Activated CD4-positive, alpha-beta memory T cell treated with anti-CD3 and anti-CD28 coated beads for 36 hours (primary cell): ENCODE measurements at regions of chr5 and their contacts with region 1.

Region 1: GRCh38 chr5:131252824-131253171 is 11.1 kb upstream of the CDC42SE2 start:
- DNase-seq: peak; percentile 90
- H3K4me3 Mint-ChIP-seq: peak overlapping the region; percentile 87
- H3K27ac Mint-ChIP-seq: peak overlapping the region; percentile 96
- H3K4me1 Mint-ChIP-seq: peaks cover 56% of the 10 kb centered on the region
- H3K27me3 Mint-ChIP-seq: no peaks in the 10 kb centered on the region

Region 2: GRCh38 chr5:130992095-130992494 is 260.7 kb before region 1 on chr5:
- CTCF ChIA-PET with region 1: no interaction called
- POLR2A ChIA-PET with region 1: no interaction called
- intact Hi-C with region 1: no loop called
- DNase-seq: no peak
- H3K4me3 Mint-ChIP-seq: no peak overlapping the region
- H3K27ac Mint-ChIP-seq: no peak overlapping the region
- H3K4me1 Mint-ChIP-seq: no peaks in the 10 kb centered on the region
- H3K27me3 Mint-ChIP-seq: peaks cover 3% of the 10 kb centered on the region

Region 3: DNA sequence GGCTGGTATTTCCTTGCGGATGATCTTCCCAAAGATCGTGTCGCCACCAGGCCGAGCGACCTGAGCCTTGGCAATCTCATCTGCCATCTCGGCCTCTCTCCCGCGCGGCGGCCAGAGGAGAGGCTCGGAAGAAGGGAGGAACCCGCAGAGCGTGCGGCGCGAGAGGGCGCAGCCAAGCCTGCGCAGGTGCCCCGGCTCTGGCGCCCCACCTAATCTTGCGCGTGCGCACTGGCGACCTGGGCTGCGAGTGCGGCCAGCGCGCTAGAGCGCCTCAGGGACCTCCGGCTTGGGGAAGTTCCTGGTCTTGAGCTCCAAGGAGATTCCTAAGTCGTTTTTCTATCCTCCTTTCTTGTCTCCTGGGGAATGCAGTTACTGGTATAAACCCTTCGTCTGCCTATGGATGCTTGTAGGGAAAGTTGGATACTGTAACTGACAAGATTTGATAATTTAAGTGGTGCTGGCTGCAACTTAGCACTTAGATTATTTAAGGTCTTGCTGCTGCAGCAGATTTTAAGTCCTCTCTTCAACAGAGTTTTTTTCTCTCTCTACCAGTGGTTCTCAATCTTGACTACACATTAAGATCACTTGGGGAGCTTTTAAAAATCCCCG is 87.6 kb before region 1 on chr5 and contains the start of gene HINT1:
- CTCF ChIA-PET with region 1: interaction called, 4 read pairs
- POLR2A ChIA-PET with region 1: interaction called, 12 read pairs
- intact Hi-C with region 1: loop called (anchors 1 kb)
- DNase-seq: peak; percentile 95
- H3K4me3 Mint-ChIP-seq: peak within 1 kb of the TSS; percentile 98
- H3K27ac Mint-ChIP-seq: peak within 1 kb of the TSS; percentile 99
- H3K4me1 Mint-ChIP-seq: peaks cover 45% of the 10 kb centered on the region
- H3K27me3 Mint-ChIP-seq: no peaks in the 10 kb centered on the region
- total RNA-seq, gene HINT1: 349 to 361 TPM

Region 4: GRCh38 chr5:131218392-131218791 is 34.4 kb before region 1 on chr5:
- CTCF ChIA-PET with region 1: interaction called, 3 read pairs
- POLR2A ChIA-PET with region 1: interaction called, 4 read pairs
- intact Hi-C with region 1: loop called (anchors 1 kb)
- DNase-seq: no peak
- H3K4me3 Mint-ChIP-seq: no peak overlapping the region
- H3K27ac Mint-ChIP-seq: no peak overlapping the region
- H3K4me1 Mint-ChIP-seq: peaks cover 43% of the 10 kb centered on the region
- H3K27me3 Mint-ChIP-seq: no peaks in the 10 kb centered on the region

Region 5: GRCh38 chr5:131272307-131272706 is 19.5 kb after region 1 on chr5:
- CTCF ChIA-PET with region 1: interaction called, 3 read pairs
- POLR2A ChIA-PET with region 1: interaction called, 55 read pairs
- intact Hi-C with region 1: loop called (anchors 1 kb)
- DNase-seq: no peak
- H3K4me3 Mint-ChIP-seq: peak overlapping the region; percentile 77
- H3K27ac Mint-ChIP-seq: peak overlapping the region; percentile 96
- H3K4me1 Mint-ChIP-seq: peaks cover 75% of the 10 kb centered on the region
- H3K27me3 Mint-ChIP-seq: no peaks in the 10 kb centered on the region

Region 6: DNA sequence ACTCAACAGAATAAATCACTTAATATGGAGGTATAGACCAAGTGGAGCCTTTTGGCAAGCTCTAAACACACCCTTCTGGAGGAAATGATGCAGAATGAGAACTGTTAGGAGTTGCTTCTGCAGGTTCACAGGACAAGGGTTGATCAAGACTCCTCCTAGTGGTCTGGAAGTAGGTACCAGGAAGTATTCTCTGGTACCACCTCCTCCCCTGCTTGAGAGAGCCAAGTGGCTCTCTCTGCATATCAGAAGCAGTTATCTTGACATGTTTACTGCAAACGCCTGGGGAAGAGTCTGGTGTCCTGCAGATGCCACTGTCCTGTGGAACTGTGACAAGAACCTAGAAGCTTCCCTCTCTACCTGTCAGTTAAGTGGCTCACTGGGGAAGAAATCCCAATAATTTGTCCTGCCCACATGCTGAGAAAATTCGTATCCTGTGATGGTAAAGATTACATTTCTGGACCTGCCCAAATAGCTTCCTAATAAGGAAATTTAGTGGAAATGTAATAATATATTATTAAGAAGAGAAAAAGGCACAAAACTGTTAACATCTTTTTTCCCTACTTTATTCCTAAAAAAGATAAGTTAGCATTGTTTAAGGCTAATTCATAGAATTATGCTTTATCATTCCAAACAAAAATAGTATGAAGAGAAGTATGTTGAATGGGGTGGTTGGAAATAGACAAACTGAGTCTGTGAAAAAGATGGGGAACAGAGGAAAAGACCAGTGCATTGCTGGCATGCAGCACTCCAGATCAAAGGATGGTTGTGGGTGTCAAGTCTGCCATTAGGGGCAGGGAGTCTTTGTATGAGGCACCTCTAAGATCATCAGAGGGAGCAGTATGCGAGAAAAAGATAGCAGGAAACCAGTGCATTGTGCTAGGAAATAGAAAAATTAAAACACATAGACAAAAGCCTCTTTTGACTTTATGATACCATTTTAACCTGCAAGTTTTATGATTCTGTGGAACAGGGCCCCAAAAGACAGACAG is 129.9 kb after region 1 on chr5:
- CTCF ChIA-PET with region 1: interaction called, 6 read pairs
- POLR2A ChIA-PET with region 1: interaction called, 13 read pairs
- intact Hi-C with region 1: loop called (anchors 1 kb)
- DNase-seq: peak; percentile 58
- H3K4me3 Mint-ChIP-seq: peak overlapping the region; percentile 39
- H3K27ac Mint-ChIP-seq: peak overlapping the region; percentile 94
- H3K4me1 Mint-ChIP-seq: peaks cover 91% of the 10 kb centered on the region
- H3K27me3 Mint-ChIP-seq: no peaks in the 10 kb centered on the region

Region 7: DNA sequence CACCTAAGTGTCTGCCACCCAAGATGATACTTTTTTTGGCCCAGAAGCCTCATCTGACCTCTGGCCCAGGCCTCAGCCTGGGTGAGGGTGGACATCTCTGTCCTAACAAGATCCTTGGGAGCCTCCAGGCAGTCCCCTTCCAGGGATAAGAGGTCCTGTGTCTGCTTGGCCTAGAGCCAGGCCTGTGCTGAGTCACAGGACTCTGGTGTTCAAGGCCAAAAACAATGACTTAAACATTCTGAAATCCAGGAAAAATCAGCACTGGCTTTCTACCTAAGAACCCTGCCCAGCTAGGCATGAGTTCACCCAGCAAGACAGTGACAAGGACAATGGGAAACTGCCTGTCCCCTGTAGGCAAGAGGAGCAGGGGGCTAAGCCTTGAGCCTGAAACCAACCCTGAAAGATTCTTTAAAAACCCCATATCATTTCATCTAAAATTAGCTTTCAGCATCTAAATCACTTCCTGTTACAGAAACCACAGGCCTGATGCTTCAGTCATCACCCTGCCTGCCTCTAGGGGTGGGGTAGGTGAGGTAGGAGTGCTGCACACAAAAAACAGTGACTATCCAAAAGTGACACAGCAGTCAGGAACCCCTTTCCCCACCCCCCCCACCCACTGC is 850.6 kb after region 1 on chr5:
- CTCF ChIA-PET with region 1: no interaction called
- POLR2A ChIA-PET with region 1: no interaction called
- intact Hi-C with region 1: loop called (anchors 10 kb)
- DNase-seq: peak; percentile 84
- H3K4me3 Mint-ChIP-seq: peak overlapping the region; percentile 38
- H3K27ac Mint-ChIP-seq: peak overlapping the region; percentile 86
- H3K4me1 Mint-ChIP-seq: peaks cover 74% of the 10 kb centered on the region
- H3K27me3 Mint-ChIP-seq: no peaks in the 10 kb centered on the region